ENCODE measurements at regions of chr2 and their contacts with region 1.

Region 1: DNA sequence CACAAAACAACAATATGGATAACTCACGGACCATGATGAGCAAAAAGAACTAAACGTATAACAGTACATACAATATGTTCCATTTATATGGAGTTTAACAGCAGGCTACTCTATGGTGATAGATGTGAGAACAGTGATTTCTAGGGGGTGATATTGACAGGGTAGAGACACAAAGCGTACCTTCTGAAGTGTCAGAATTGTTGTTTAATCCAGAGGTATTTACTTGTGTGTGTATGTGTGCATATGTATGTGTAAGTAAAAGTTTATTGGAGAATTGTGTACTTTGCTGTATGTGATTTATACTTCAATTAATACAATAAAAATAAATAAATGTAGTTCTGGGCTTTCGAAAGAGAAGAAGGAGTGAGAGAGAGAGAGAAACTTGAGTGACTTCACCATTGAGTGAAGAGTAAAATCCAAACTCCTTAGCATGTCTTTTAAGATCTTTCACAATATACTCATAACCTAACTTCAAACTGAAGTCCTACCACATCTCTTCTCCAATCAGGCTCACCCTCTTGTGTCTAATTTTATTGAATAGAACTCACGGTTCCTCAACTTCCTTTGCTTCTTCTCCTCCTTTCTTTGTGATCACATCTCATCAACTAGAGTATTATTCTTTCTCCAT is 126.0 kb upstream of the KLF7 start:
- DNase-seq: no peak
- ATAC-seq: no peak
- H3K4me3 Mint-ChIP-seq: no peak overlapping the region
- H3K27ac Mint-ChIP-seq: no peak overlapping the region
- H3K4me1 Mint-ChIP-seq: peaks cover 8% of the 10 kb centered on the region
- H3K27me3 Mint-ChIP-seq: no peaks in the 10 kb centered on the region
- CTCF ChIP-seq: no peak

Region 2: DNA sequence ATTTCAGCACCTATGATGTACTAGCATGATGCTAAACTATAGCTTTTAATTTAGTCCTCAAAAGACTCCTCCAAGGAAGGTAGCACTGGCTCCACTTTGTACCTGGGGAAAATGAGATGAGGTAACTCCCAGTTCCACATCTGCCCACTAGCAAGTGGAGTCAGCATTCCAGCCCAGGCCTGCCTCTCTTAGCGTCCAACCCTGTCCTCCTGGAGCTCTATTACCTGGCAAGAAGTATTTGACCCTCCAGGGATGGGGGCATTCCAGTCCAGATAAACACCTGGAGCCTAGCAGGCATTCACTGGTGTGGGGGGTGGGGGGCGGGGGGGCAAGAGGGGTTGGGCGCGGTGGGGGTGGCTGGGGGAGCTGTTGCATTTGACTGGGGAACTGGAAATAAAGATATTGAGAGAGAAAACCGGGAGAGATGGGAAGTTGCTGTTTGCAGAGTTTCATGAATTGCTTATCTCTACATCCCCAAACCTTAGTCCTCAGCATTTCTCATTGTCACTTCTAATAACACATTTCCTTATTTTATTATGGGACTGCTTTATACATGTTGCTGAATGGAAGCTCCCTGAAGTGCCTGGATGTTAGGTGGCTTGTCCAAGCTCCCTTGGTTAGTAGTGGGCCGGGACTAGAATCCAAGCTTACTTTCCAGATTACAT is 500.0 kb after region 1 on chr2:
- CTCF ChIA-PET with region 1: no interaction called
- POLR2A ChIA-PET with region 1: interaction called, 14 read pairs
- intact Hi-C with region 1: no loop called
- DNase-seq: no peak
- ATAC-seq: no peak
- H3K4me3 Mint-ChIP-seq: no peak overlapping the region
- H3K27ac Mint-ChIP-seq: no peak overlapping the region
- H3K4me1 Mint-ChIP-seq: no peaks in the 10 kb centered on the region
- H3K27me3 Mint-ChIP-seq: peaks cover 10% of the 10 kb centered on the region
- CTCF ChIP-seq: no peak